Heart right ventricle (tissue), 16 donors: ENCODE measurements at regions of chr1 and their contacts with region 1.

Region 1: GRCh38 chr1:203754455-203754864 is 10.5 kb upstream of the LAX1 start:
- DNase-seq: no peak
- ATAC-seq: no peak
- H3K4me3 ChIP-seq: no peak overlapping the region
- H3K27ac ChIP-seq: no peak overlapping the region
- H3K4me1 ChIP-seq: peaks cover 0 to 6% (median 0%) of the 10 kb centered on the region in 9 donors
- H3K27me3 ChIP-seq: no peaks in the 10 kb centered on the region
- CTCF ChIP-seq: no peak

Region 2: DNA sequence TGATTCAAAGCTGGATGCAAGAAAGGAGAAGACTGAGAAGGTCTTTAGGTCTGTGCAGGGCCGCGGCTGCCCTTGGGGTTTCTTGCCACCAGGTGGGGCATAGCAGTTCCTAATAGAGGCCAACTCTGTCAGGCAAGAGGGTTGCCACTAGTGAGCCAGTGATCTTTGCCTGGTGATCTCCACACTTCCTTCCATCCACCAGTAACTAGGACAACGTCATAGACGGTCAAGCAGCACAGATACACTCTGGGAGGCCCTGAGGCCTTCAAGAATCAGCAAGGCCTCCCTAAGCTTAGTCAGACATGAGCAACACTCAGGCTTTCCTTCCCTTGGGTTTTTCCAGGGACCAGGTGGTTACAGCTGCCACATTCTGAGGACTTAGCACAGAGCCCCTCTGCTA is 160.7 kb before region 1 on chr1:
- intact Hi-C with region 1: no loop called
- DNase-seq: peak in 1 of 2 donors; percentile 24
- ATAC-seq: peak in 3 of 8 donors; percentile 13 to 61 (median 46)
- H3K4me3 ChIP-seq: no peak overlapping the region
- H3K27ac ChIP-seq: no peak overlapping the region
- H3K4me1 ChIP-seq: peaks cover 9 to 41% (median 32%) of the 10 kb centered on the region in 9 donors
- H3K27me3 ChIP-seq: no peaks in the 10 kb centered on the region
- CTCF ChIP-seq: peak in 5 of 9 donors; percentile 20 to 39 (median 24)

Region 3: DNA sequence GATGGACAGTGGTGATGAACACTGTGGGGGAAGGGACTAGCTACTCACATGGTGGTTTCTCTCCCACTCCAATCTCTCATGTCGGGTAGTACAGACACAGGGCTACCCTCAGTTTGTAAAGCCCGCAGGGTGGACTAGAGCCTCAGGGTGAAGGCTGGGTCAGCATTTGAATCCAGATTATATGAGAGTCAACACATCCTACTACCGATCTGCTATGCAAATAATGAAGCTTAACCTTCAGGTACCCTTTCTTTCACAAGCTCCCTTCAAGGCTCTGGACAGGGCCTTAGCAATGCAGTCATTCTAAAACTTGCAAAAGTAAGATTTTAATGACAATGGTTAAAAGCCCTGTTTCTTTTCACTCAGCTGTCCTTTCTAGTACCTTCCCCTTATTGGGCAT is 35.5 kb after region 1 on chr1:
- intact Hi-C with region 1: loop called in 1 of 10 experiments (anchors 5 kb)
- DNase-seq: no peak
- ATAC-seq: no peak
- H3K4me3 ChIP-seq: no peak overlapping the region
- H3K27ac ChIP-seq: no peak overlapping the region
- H3K4me1 ChIP-seq: peaks cover 0 to 4% (median 0%) of the 10 kb centered on the region in 9 donors
- H3K27me3 ChIP-seq: no peaks in the 10 kb centered on the region
- CTCF ChIP-seq: no peak